ACHN (cell line): ENCODE measurements at regions of chr4 and their contacts with region 1.

Region 1: GRCh38 chr4:21802406-21802805 is 146.2 kb downstream of the KCNIP4 start:
- DNase-seq: peak; percentile 74

Region 2: DNA sequence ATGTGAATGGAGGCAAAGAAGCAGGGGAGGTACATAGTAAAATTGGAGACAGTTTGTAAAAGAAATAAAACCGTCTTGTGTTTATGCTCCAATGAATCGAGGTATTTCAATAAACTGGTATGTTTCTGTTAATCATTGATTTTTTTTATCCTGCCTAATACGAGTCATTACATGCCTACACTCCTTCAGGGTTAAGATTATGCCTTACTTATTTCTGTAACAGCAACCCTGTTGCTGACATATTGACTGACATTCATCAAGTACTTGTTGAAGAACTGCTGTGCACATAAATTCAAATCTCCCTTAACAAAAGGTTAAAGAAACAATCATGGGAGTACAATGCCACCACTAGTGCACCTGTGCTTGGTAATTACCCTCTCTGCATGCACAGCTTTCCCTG is 284.9 kb before region 1 on chr4:
- in situ Hi-C with region 1: no loop called
- DNase-seq: peak; percentile 44

Region 3: DNA sequence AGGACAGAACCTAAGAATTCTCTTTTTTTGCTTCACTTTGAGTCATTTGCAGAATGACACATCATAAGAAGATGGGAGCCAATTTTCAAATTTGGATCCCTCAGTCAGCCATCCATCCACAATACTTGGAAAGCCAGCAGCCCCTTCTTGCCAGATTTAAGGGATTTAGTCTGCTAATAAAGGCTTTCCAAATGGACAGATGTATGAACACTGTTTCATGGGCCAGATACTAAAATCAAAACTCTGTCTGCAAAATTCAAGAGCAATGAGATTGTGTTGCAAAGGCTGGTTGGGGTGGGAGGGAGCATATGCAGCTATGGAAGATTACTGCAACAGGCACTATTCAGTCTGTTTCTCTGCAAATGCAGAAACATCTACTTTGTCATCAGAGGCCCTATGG is 183.9 kb after region 1 on chr4:
- in situ Hi-C with region 1: no loop called
- DNase-seq: no peak

Region 4: GRCh38 chr4:22389240-22389870 is 586.9 kb after region 1 on chr4:
- in situ Hi-C with region 1: loop called (anchors 25 kb)
- DNase-seq: peak; percentile 68